ENCODE measurements at regions of chr12 and their contacts with region 1.

Region 1: GRCh38 chr12:114662512-114663177 is 21.3 kb downstream of the TBX3 start:
- DNase-seq: peak; percentile 26 to 68 (median 54)
- ATAC-seq: no peak
- H3K4me3 ChIP-seq: no peak overlapping the region
- H3K4me3 Mint-ChIP-seq: no peak overlapping the region
- H3K27ac ChIP-seq: no peak overlapping the region
- H3K27ac Mint-ChIP-seq: no peak overlapping the region
- H3K4me1 ChIP-seq: no peaks in the 10 kb centered on the region
- H3K4me1 Mint-ChIP-seq: no peaks in the 10 kb centered on the region
- H3K27me3 ChIP-seq: peaks cover 0 to 5% of the 10 kb centered on the region in 2 experiments
- H3K27me3 Mint-ChIP-seq: peaks cover 48% of the 10 kb centered on the region
- CTCF ChIP-seq: peak; percentile 78

Region 2: GRCh38 chr12:114368685-114369452 is 293.8 kb before region 1 on chr12:
- CTCF ChIA-PET with region 1: no interaction called
- POLR2A ChIA-PET with region 1: no interaction called
- intact Hi-C with region 1: no loop called
- DNase-seq: no peak
- ATAC-seq: no peak
- H3K4me3 ChIP-seq: no peak overlapping the region
- H3K4me3 Mint-ChIP-seq: no peak overlapping the region
- H3K27ac ChIP-seq: no peak overlapping the region
- H3K27ac Mint-ChIP-seq: no peak overlapping the region
- H3K4me1 ChIP-seq: no peaks in the 10 kb centered on the region
- H3K4me1 Mint-ChIP-seq: no peaks in the 10 kb centered on the region
- H3K27me3 ChIP-seq: peaks cover 0 to 3% of the 10 kb centered on the region in 2 experiments
- H3K27me3 Mint-ChIP-seq: peaks cover 12% of the 10 kb centered on the region
- CTCF ChIP-seq: no peak

Region 3: DNA sequence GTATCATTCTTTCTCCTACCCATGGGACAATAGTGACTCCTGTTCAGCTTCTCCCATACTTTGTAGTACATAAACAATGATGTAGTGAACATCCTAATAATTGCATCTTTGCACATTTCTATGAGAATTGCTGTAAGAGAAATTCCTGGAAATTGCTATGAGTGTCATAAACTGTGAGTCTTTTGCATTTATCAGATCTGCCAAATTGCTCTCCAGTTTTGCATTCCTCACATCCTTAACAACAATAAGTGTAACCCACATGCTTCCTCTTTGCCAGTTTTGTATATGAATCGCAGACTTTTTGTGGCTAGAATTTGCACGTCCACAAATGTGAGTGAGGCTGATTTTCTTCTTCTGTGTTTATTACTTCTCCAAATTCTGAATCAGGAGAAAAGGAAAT is 132.7 kb before region 1 on chr12:
- CTCF ChIA-PET with region 1: no interaction called
- POLR2A ChIA-PET with region 1: no interaction called
- intact Hi-C with region 1: no loop called
- DNase-seq: no peak
- ATAC-seq: no peak
- H3K4me3 ChIP-seq: no peak overlapping the region
- H3K4me3 Mint-ChIP-seq: no peak overlapping the region
- H3K27ac ChIP-seq: no peak overlapping the region
- H3K27ac Mint-ChIP-seq: no peak overlapping the region
- H3K4me1 ChIP-seq: no peaks in the 10 kb centered on the region
- H3K4me1 Mint-ChIP-seq: no peaks in the 10 kb centered on the region
- H3K27me3 ChIP-seq: no peaks in the 10 kb centered on the region
- H3K27me3 Mint-ChIP-seq: peaks cover 6% of the 10 kb centered on the region
- CTCF ChIP-seq: no peak

Region 4: DNA sequence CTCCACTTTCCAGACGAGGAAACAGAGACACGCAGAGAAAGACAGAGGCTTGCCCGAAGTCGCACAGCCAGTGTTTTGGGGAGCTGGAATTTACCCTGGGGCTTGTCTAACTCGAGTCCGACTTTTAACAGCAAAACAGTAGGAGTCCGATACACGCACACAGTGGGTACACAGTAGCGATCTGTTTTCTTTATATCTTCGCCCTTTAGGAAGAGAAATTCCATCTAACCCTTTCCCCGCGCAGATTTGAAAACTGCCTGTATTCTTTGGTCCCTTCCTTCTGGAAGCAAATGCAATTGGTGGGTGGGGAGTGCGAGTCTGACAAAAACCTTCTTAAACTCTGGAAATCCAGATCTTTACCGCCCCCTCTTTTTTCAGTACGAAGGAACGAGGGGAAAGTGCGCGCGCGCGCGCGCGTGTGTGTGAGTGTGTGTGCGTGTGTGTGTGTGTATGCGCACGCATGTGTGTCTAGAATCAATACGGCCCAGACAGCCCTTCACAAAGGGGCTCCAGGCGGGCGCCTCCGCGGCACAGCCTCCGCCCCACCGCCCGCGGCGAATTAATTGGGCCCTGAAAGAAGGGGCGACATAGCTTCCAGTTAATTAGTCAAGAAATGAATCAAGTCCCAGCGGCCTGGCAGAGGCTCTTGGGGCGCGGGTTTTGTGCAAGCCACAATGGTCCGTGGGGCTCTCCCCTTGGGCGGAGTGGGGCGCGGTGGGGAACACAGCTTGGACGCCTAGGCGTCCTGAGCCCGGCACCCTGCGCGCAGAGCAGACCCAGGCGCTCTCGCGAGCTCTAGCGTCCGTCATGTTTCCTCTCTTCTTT is 35.3 kb after region 1 on chr12:
- CTCF ChIA-PET with region 1: no interaction called
- POLR2A ChIA-PET with region 1: no interaction called
- intact Hi-C with region 1: no loop called
- DNase-seq: no peak
- ATAC-seq: no peak
- H3K4me3 ChIP-seq: no peak overlapping the region
- H3K4me3 Mint-ChIP-seq: no peak overlapping the region
- H3K27ac ChIP-seq: no peak overlapping the region
- H3K27ac Mint-ChIP-seq: no peak overlapping the region
- H3K4me1 ChIP-seq: no peaks in the 10 kb centered on the region
- H3K4me1 Mint-ChIP-seq: no peaks in the 10 kb centered on the region
- H3K27me3 ChIP-seq: peaks cover 7 to 24% of the 10 kb centered on the region in 2 experiments
- H3K27me3 Mint-ChIP-seq: peaks cover 74% of the 10 kb centered on the region
- CTCF ChIP-seq: no peak

Region 5: DNA sequence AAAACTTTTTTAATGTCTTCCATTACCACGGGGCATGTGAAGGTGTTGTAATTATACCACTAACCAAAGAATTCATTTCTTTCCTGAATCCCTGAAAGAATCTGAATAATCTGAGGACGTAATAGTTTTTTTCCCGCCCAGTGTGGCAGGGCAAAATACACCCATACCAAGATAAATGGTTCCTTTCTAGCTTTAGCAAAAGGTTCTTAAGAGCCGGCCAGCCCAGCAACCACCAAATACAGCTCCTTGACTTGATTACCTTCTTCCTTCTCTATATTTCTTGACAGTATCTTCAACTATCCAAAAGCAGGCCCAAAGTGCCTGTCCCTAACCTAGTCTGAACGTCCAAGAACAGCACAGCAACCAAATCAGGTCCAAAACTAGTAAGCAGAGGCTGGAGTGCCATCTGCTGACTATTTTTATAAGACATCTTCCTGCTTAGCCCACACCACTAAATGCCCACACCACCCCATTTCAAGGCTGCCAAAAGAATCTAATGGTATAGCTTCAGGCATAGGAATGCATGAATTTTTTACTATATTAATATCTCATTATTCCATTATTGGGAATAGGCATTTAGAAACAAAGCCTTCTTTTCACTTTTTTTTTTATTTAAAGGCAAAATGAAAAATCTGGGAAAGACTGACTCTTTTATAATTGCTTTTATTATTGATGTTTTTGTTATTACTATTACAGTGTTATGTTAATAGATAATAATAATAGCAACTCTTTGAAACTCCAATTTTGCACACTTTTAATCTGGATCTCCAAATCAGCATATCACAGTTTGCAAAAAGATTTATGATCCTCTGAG is 1090.5 kb after region 1 on chr12:
- CTCF ChIA-PET with region 1: no interaction called
- POLR2A ChIA-PET with region 1: no interaction called
- intact Hi-C with region 1: loop called in 1 of 2 experiments (anchors 10 kb)
- DNase-seq: peak in 1 of 9 experiments; percentile 7
- ATAC-seq: no peak
- H3K4me3 ChIP-seq: no peak overlapping the region
- H3K4me3 Mint-ChIP-seq: no peak overlapping the region
- H3K27ac ChIP-seq: no peak overlapping the region
- H3K27ac Mint-ChIP-seq: no peak overlapping the region
- H3K4me1 ChIP-seq: no peaks in the 10 kb centered on the region
- H3K4me1 Mint-ChIP-seq: no peaks in the 10 kb centered on the region
- H3K27me3 ChIP-seq: no peaks in the 10 kb centered on the region
- H3K27me3 Mint-ChIP-seq: peaks cover 13% of the 10 kb centered on the region
- CTCF ChIP-seq: no peak

Region 6: GRCh38 chr12:115916910-115917668 is 1254.4 kb after region 1 on chr12:
- CTCF ChIA-PET with region 1: interaction called, 23 read pairs
- POLR2A ChIA-PET with region 1: no interaction called
- intact Hi-C with region 1: loop called in 1 of 2 experiments (anchors 1 kb)
- DNase-seq: peak; percentile 48 to 84 (median 70)
- ATAC-seq: peak; percentile 84
- H3K4me3 ChIP-seq: no peak overlapping the region
- H3K4me3 Mint-ChIP-seq: peak overlapping the region; percentile 13
- H3K27ac ChIP-seq: no peak overlapping the region
- H3K27ac Mint-ChIP-seq: no peak overlapping the region
- H3K4me1 ChIP-seq: no peaks in the 10 kb centered on the region
- H3K4me1 Mint-ChIP-seq: peaks cover 5% of the 10 kb centered on the region
- H3K27me3 ChIP-seq: peaks cover 4 to 11% of the 10 kb centered on the region in 2 experiments
- H3K27me3 Mint-ChIP-seq: peaks cover 67% of the 10 kb centered on the region
- CTCF ChIP-seq: peak; percentile 99

Measured in CD8-positive, alpha-beta T cell (primary cell).